Aorta (tissue), 5 donors: ENCODE measurements at regions of chr1 and their contacts with region 1.

Region 1: GRCh38 chr1:47710329-47711071 is 272.7 kb downstream of the FOXD2 start:
- DNase-seq: peak; percentile 78 to 94
- ATAC-seq: peak; percentile 92
- H3K4me3 ChIP-seq: no peak overlapping the region
- H3K27ac ChIP-seq: no peak overlapping the region
- H3K4me1 ChIP-seq: no peaks in the 10 kb centered on the region
- H3K27me3 ChIP-seq: no peaks in the 10 kb centered on the region

Region 2: DNA sequence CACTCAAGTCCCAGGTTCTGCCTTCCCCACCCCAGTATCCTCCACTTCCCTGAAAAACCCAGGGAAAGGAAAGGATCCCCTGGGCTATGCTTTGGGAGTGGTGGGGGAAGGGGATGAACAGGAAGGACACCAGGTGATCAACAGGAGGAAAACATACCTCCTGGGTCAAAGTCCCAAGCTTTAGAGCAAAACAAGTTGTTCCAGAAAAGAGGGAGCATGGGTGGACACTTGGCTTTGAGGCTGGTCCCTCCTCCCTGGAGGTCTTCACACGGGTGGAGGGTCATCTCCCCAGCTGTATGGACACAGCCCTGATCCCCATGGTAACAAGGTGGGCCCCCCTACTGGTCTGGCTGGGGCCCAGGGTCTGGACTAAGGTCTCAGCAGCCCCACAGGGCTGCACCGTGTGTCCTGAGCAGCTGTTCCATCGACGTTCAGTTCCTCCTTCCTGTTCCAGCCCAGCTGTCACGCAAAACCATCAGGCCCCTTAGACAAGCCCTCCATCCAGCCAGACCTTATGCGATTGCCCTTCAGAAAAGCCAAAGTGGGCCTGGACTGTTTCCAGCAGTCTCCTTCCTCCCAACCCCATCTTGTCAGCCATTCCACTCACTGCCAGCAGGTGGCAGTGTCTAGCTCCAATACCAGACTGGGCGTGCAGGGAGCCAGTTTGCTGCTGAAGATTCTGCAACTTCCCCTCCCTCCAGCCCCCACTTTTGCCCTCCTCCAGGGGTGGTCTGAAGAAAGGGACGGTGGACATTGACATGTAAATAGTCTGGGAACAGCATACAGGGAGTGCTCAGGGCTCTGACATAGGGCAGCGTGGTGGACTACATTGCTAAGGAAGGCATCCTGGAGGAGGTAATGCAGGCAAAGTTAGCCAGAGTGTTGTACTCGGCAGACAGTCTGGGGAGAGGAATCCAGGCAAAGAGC is 517.8 kb before region 1 on chr1:
- intact Hi-C with region 1: loop called in 1 of 2 experiments (anchors 10 kb)
- DNase-seq: peak; percentile 82 to 89
- ATAC-seq: peak; percentile 58
- H3K4me3 ChIP-seq: no peak overlapping the region
- H3K27ac ChIP-seq: no peak overlapping the region
- H3K4me1 ChIP-seq: peaks cover 0 to 3% of the 10 kb centered on the region in 2 donors
- H3K27me3 ChIP-seq: no peaks in the 10 kb centered on the region

Region 3: DNA sequence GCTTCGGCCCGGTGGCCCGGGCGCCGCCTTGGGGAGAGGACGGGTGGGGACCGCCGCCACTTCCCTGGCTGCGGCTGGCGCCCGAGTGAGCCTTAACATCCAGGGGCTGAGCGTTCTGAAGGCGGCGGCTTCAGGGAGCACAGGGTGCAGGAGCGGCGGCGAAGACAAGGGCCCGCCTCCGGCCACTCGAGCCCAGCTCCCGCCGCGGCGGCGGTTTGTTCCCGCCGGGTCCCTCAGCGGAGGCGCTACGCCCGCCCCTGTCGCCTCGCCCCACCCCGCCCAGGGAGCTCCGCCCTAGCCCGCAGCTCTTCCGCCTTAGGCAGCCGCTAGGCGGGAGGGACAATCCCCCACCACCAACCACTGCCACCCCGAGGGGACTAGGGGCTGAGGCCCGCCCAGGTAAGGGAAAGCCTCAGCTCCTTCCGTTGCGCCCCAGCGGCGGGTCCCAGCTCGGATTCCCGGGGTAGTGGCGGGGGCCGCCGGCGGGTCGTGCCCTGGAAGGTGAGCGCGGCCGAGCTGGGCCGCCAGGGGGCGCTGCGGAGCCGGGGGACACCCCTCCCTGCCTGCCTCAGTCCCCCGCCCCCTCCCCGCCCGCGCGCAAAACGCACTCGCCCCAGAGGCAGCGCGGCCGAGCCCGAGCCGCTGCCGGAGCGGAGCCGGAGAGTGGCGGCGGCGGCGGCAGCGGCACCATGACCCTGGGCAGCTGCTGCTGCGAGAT is 272.9 kb before region 1 on chr1 and contains the start of gene FOXD2:
- intact Hi-C with region 1: loop called (anchors 1 kb)
- DNase-seq: peak; percentile 93 to 97
- ATAC-seq: peak; percentile 93
- H3K4me3 ChIP-seq: peak within 1 kb of the TSS; percentile 57 to 84
- H3K27ac ChIP-seq: peak within 1 kb of the TSS; percentile 58 to 77
- H3K4me1 ChIP-seq: no peaks in the 10 kb centered on the region
- H3K27me3 ChIP-seq: no peaks in the 10 kb centered on the region
- total RNA-seq, gene FOXD2: 1.6 to 2.7 TPM

Region 4: GRCh38 chr1:47507881-47508701 is 202.4 kb before region 1 on chr1:
- intact Hi-C with region 1: loop called (anchors 2 to 5 kb)
- DNase-seq: peak; percentile 44 to 81
- ATAC-seq: peak; percentile 79
- H3K4me3 ChIP-seq: peak overlapping the region; percentile 47 to 49
- H3K27ac ChIP-seq: peak overlapping the region in 1 of 2 donors; percentile 6
- H3K4me1 ChIP-seq: no peaks in the 10 kb centered on the region
- H3K27me3 ChIP-seq: no peaks in the 10 kb centered on the region

Region 5: DNA sequence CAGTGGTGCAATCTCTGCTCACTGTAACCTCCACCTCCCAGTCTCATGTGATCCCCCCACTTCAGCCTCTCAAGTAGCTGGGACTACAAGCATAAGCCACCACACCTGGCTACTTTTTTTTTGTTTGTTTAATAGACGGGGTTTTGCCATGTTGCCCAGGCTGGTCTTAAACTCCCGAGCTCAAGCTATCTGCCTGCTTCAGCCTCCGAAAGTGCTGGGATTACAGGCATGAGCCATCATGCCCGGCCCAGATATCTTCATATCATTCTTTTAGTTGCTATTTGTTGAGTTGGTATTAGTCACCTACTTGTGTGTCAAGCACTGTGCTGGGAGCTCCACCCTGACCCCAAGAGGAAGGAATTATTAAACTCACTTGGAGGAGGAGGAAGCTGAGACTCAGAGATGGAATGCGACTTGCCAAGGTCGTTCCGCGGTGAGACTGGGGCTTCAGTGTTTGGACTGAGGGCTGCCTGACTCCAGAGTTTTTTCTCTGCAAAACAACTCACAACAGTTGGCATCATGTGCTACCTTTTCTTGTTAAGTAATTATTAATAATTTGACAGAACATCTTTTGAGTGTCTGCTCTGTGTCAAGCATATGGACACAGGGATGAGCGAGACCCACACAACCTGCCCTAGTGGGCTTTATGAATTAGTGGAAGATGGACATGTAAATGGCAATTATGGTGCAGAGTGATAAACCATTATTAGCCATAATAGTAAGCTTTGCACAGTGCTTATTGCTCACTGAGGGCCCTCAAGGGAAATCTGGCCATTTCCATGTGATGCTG is 140.6 kb before region 1 on chr1:
- intact Hi-C with region 1: loop called (anchors 5 kb)
- DNase-seq: peak; percentile 80 to 82
- ATAC-seq: peak; percentile 80
- H3K4me3 ChIP-seq: no peak overlapping the region
- H3K27ac ChIP-seq: no peak overlapping the region
- H3K4me1 ChIP-seq: no peaks in the 10 kb centered on the region
- H3K27me3 ChIP-seq: no peaks in the 10 kb centered on the region

Region 6: DNA sequence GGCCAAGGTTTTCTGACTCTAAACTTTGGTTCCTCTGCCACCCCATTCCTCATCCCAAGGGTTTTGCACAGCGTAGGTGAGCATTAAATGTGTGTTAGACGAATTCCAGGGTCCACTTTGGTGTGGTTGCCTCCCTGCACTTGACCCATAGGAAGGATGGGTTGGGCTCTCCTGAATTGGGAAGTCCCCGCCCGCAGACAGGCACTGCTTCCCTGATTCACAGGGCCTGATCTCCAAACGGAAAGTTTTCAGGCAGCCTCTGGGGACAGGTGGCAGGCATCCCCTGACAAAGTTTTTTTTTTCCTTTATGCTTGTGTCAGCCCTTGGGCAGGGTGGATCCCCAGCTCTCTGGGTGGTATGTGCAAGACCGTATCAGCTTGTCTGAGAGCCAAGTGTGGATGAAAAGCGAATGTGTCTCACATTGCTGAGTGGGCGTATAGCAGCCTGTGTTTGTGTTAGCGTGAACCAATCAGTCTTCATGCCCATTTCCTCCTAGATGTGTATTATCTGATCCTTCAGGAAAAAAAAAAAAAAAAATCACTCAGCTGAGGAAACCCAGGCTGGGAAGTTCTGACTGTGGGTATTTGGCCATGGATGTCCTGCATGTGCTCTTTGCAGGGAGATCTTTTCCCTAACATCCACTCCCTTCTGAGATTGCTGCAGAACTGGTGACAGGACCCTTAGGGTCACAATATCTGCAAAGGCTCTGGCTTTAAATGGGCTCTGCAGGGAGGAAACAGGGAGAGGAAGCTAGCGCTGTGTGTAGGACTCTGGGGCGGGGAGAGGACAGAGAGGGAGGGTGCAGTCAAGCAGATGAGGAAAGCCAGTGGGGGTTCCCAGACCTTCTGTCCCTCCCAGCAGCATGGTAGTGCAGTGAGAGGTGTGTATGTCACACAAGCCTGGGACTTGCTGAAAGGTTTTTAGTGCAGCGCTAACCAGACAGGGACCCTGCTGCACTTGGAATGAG is 328.9 kb after region 1 on chr1:
- intact Hi-C with region 1: no loop called
- DNase-seq: no peak
- ATAC-seq: no peak
- H3K4me3 ChIP-seq: no peak overlapping the region
- H3K27ac ChIP-seq: no peak overlapping the region
- H3K4me1 ChIP-seq: no peaks in the 10 kb centered on the region
- H3K27me3 ChIP-seq: no peaks in the 10 kb centered on the region